ENCODE measurements at regions of chr11 and their contacts with region 1.

Region 1: GRCh38 chr11:118895142-118896039 is 11.7 kb downstream of the CXCR5 start:
- DNase-seq: peak; percentile 88
- ATAC-seq: peak; percentile 86
- H3K4me3 Mint-ChIP-seq: peak overlapping the region; percentile 67
- H3K27ac Mint-ChIP-seq: peak overlapping the region; percentile 95
- H3K4me1 Mint-ChIP-seq: peaks cover 74% of the 10 kb centered on the region
- H3K27me3 Mint-ChIP-seq: no peaks in the 10 kb centered on the region
- CTCF ChIP-seq: no peak

Region 2: GRCh38 chr11:118870396-118871345 is 24.7 kb before region 1 on chr11:
- CTCF ChIA-PET with region 1: interaction called, 9 read pairs
- POLR2A ChIA-PET with region 1: interaction called, 14 read pairs
- intact Hi-C with region 1: no loop called
- DNase-seq: peak; percentile 58
- ATAC-seq: peak; percentile 47
- H3K4me3 Mint-ChIP-seq: peak overlapping the region; percentile 80
- H3K27ac Mint-ChIP-seq: peak overlapping the region; percentile 99
- H3K4me1 Mint-ChIP-seq: peaks cover 58% of the 10 kb centered on the region
- H3K27me3 Mint-ChIP-seq: no peaks in the 10 kb centered on the region
- CTCF ChIP-seq: no peak

Region 3: DNA sequence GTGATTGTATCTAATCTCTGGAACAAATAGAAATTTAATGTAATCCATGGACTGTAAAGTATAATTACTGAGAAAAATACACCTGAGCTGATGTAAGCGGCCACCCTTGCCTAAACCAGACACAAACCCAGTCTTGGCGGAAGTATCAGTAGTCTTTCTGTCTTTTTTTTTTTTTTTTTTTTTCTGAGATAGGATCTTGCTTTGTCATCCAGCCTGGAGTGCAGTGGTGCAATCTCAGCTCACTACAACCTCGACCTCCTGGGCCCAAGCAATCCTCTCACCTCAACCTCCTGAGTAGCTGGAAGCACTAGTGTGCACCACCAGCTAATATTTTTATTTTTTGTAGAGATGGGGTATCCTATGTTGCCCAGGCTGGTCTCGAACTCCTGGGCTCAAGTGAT is 17.2 kb before region 1 on chr11:
- CTCF ChIA-PET with region 1: interaction called, 13 read pairs
- POLR2A ChIA-PET with region 1: interaction called, 24 read pairs
- intact Hi-C with region 1: no loop called
- DNase-seq: peak; percentile 47
- ATAC-seq: peak; percentile 12
- H3K4me3 Mint-ChIP-seq: no peak overlapping the region
- H3K27ac Mint-ChIP-seq: peak overlapping the region; percentile 98
- H3K4me1 Mint-ChIP-seq: peaks cover 87% of the 10 kb centered on the region
- H3K27me3 Mint-ChIP-seq: no peaks in the 10 kb centered on the region
- CTCF ChIP-seq: no peak

Region 4: DNA sequence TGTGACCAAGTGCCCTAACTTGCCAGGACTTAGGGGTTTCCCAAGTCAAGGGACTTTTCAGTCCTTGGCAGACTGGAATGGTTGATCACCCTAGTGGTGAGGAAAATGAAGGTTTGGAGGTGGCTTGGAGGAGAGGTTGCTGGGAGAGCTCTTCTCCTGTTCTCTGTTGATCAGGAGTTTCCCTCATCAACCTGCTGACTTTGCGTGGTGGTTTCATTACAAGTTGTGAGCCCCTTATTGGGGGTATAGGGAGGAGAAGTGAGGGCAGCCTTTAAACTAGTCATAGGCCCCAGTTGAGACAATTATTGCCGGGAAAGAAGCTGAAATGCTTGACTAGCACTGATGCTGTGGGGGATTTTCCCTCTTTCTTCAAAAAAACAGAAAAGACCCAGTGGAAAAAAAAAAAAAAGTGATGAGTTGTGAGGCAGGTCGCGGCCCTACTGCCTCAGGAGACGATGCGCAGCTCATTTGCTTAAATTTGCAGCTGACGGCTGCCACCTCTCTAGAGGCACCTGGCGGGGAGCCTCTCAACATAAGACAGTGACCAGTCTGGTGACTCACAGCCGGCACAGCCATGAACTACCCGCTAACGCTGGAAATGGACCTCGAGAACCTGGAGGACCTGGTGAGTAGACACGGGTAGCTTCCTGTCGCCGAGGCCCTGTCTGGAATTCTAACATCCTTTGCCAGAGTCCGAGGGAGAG is 11.9 kb before region 1 on chr11 and contains the start of gene CXCR5:
- CTCF ChIA-PET with region 1: interaction called, 13 read pairs
- POLR2A ChIA-PET with region 1: interaction called, 24 read pairs
- intact Hi-C with region 1: no loop called
- DNase-seq: peak; percentile 60
- ATAC-seq: peak; percentile 49
- H3K4me3 Mint-ChIP-seq: peak within 1 kb of the TSS; percentile 57
- H3K27ac Mint-ChIP-seq: peak within 1 kb of the TSS; percentile 77
- H3K4me1 Mint-ChIP-seq: peaks cover 67% of the 10 kb centered on the region
- H3K27me3 Mint-ChIP-seq: no peaks in the 10 kb centered on the region
- CTCF ChIP-seq: no peak
- total RNA-seq, gene CXCR5: 0.60 to 0.92 TPM

Region 5: DNA sequence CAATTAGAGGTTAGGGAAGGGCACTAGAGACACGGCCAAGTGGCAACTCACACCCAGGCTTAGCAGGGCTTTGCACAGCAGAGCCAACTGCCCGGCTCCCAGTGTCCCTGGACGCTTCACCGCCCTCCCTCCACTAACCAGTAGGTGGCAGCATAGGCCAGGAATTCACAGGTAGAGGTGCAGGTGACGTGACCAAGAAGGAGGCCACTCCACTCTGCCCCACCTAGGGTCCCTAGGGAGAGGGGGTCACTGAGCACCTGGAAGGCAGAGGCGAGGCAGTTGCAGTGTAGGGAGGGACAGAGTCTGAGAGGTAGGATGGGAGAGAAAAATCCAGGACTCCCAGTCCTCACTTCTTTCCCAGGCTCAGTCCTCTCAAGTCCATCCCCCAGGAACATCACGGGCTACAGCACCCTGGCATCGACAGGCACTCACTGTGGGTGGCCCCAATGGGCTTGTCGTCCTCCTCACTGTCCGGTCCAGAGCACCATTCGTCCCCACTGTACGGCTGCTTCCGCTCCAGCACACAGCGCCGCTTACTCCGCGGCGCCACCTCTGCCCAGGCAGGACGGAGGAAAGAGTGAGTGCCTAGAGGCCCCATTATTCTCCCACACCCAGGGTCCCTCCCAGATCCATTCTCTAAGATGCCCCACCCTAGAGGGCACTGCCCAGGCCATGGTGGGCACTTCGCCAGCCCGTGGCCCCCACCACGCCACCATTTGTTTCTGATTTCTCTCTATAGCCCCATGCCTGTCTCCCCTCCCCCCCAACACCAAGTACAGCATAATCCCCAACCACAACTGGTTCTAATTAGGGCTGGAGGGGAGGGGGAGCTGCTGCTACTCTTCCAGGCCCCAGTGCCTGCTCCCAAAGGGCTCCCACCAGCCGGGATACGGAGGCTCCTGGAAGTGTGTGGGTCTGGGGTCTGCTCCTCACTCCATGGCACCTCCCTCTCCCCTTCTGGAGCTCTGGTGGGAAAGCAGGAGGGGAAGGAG is 12.0 kb after region 1 on chr11:
- CTCF ChIA-PET with region 1: interaction called, 9 read pairs
- POLR2A ChIA-PET with region 1: interaction called, 11 read pairs
- intact Hi-C with region 1: no loop called
- DNase-seq: peak; percentile 92
- ATAC-seq: peak; percentile 61
- H3K4me3 Mint-ChIP-seq: no peak overlapping the region
- H3K27ac Mint-ChIP-seq: peak overlapping the region; percentile 85
- H3K4me1 Mint-ChIP-seq: peaks cover 46% of the 10 kb centered on the region
- H3K27me3 Mint-ChIP-seq: no peaks in the 10 kb centered on the region
- CTCF ChIP-seq: peak; percentile 86